MCF 10A (cell line): ENCODE measurements at regions of chr4 and their contacts with region 1.

Region 1: GRCh38 chr4:152679414-152680281 is at the start of gene TMEM154:
- DNase-seq: peak; percentile 93
- H3K4me3 Mint-ChIP-seq: peak within 1 kb of the TSS; percentile 94
- H3K27ac Mint-ChIP-seq: peak within 1 kb of the TSS; percentile 91
- H3K4me1 Mint-ChIP-seq: peaks cover 22% of the 10 kb centered on the region
- H3K27me3 Mint-ChIP-seq: no peaks in the 10 kb centered on the region
- CTCF ChIP-seq: no peak
- total RNA-seq, gene TMEM154: 37.9 and 41.5 TPM in 2 replicates

Region 2: GRCh38 chr4:152382057-152382785 is 297.4 kb before region 1 on chr4:
- CTCF ChIA-PET with region 1: no interaction called
- POLR2A ChIA-PET with region 1: no interaction called
- intact Hi-C with region 1: no loop called
- DNase-seq: no peak
- H3K4me3 Mint-ChIP-seq: no peak overlapping the region
- H3K27ac Mint-ChIP-seq: no peak overlapping the region
- H3K4me1 Mint-ChIP-seq: peaks cover 10% of the 10 kb centered on the region
- H3K27me3 Mint-ChIP-seq: no peaks in the 10 kb centered on the region
- CTCF ChIP-seq: no peak

Region 3: GRCh38 chr4:152696764-152697261 is 17.2 kb after region 1 on chr4:
- CTCF ChIA-PET with region 1: interaction called, 5 read pairs
- POLR2A ChIA-PET with region 1: interaction called, 47 read pairs
- intact Hi-C with region 1: no loop called
- DNase-seq: peak; percentile 70
- H3K4me3 Mint-ChIP-seq: no peak overlapping the region
- H3K27ac Mint-ChIP-seq: no peak overlapping the region
- H3K4me1 Mint-ChIP-seq: peaks cover 8% of the 10 kb centered on the region
- H3K27me3 Mint-ChIP-seq: no peaks in the 10 kb centered on the region
- CTCF ChIP-seq: no peak

Region 4: GRCh38 chr4:152779513-152780266 is 100.0 kb after region 1 on chr4 and contains the starts of genes ARFIP1 and TIGD4:
- CTCF ChIA-PET with region 1: no interaction called
- POLR2A ChIA-PET with region 1: interaction called, 20 read pairs
- intact Hi-C with region 1: no loop called
- DNase-seq: peak; percentile 97
- H3K4me3 Mint-ChIP-seq: peak within 1 kb of the TSS; percentile 87
- H3K27ac Mint-ChIP-seq: peak within 1 kb of the TSS; percentile 91
- H3K4me1 Mint-ChIP-seq: peaks cover 24% of the 10 kb centered on the region
- H3K27me3 Mint-ChIP-seq: peaks cover 13% of the 10 kb centered on the region
- CTCF ChIP-seq: no peak
- total RNA-seq, gene ARFIP1: 26.7 and 35.5 TPM in 2 replicates
- total RNA-seq, gene TIGD4: 0.12 and 0.32 TPM in 2 replicates